ENCODE measurements at regions of chr2 and their contacts with region 1.

Region 1: DNA sequence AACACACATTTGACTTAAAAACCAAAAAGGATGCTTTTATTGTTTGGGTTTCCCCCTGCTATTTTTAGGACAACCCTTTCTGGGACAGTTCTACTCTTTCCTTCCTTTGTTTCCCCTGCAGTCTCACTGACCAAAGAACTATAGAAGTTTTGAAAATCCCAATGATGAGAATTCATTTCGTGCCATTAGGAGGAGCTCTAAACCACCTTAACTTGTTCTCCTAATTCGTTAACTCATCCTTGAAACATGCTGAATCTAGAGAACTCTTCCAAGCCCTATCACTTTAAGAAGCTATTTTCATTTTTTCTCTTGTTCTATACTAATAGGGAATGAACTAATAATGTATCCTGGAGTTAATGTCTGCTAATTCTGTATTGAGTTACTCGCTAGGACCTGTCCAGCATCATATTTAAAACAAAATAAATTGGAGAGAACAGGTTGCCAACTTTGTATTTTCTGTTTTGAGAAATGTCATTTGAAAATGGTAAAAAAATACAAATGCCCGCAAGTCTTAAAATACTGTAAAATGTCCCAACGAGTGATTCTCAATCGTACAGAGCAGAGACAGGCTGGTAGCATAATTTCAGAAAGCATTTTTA is 62.9 kb downstream of the AFTPH start:
- DNase-seq: no peak
- H3K4me3 ChIP-seq: no peak overlapping the region
- H3K27ac ChIP-seq: no peak overlapping the region
- H3K4me1 ChIP-seq: no peaks in the 10 kb centered on the region
- H3K27me3 ChIP-seq: no peaks in the 10 kb centered on the region
- CTCF ChIP-seq: peak; percentile 39 to 72 (median 62)
- POLR2A ChIP-seq: no peak

Region 2: DNA sequence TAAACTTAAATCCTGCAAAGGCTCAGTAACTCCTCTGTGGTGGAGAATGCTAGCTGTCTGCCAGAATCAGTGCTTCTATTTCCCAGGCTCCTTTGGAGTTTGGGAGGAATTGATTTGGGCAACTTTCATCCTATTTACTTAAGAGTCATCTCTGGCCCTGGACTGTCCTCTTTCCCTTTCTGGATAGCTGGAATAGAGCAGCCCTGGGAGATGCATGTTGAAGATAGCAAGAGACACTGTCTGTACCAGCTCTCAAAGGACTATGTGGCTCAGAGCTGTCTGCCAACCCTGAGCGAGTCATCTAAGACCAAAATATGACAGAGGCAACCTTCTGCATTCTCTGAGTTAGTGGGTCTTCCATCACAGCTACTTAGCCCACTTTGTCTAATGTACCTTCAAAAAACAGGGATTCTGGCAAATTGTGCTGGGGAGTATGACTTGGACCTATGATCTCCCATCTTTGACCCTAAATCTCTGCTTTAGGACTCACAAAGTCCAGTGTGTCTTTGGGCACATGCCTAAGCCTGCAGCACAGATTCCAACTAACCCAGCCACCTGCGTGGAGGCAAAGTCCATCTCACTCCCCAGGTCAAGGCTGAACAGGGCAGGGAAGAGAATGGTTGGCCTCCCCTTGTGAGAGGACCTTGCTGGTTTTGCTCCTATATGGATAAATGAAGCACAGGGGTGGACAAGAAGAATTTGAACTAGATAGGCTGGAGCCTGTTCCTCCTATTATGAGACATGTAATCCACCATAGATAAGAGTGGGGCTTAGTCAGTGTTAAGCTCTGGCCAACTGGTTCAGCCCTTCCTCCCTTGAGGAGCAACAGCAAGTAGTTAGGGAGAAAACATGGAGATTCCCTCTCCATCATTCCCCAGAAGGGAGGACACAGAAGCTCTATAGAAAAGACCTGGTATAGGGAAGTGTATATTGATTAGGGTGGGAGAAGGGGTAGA is 343.6 kb before region 1 on chr2:
- intact Hi-C with region 1: no loop called
- DNase-seq: no peak
- H3K4me3 ChIP-seq: no peak overlapping the region
- H3K27ac ChIP-seq: no peak overlapping the region
- H3K4me1 ChIP-seq: no peaks in the 10 kb centered on the region
- H3K27me3 ChIP-seq: no peaks in the 10 kb centered on the region
- CTCF ChIP-seq: no peak
- POLR2A ChIP-seq: no peak

Region 3: DNA sequence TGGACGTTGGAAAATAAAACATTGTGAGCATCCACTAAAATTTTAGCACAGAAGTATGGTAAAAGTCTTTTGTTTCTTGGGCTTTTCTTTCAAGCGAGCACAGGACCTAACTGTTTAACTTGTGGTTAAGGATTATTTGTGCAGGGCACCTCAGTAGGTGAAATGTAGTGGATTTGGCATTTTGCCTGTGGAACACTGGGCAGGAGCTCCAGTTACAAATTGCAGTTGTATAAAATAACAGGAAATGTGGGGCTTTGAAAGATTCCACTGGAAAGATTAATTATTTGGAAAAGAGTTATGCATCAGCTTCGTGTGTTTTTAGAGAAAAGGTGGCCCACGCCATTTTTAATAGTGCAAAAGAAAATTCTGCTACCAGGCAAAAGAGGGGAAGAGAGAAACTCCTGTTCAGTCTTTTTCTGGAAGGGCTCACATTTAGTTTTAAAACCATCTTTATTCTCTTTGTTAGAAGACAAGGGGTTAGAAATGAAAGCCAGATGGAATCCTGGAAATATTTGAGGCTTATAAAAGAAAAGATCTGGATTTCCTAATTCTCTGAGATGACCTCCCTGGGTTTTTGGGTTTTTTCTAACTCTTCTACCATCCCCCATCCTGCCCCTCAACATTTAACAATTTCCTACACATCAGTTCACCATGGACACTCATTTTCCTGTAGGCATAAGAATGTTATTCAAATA is 211.0 kb after region 1 on chr2:
- intact Hi-C with region 1: no loop called
- DNase-seq: no peak
- H3K4me3 ChIP-seq: no peak overlapping the region
- H3K27ac ChIP-seq: peak overlapping the region in 1 of 2 donors; percentile 27
- H3K4me1 ChIP-seq: no peaks in the 10 kb centered on the region
- H3K27me3 ChIP-seq: no peaks in the 10 kb centered on the region
- CTCF ChIP-seq: no peak
- POLR2A ChIP-seq: no peak

Region 4: GRCh38 chr2:64865073-64865830 is 278.3 kb after region 1 on chr2:
- intact Hi-C with region 1: loop called (anchors 10 kb)
- DNase-seq: peak; percentile 65 to 76
- H3K4me3 ChIP-seq: peak overlapping the region; percentile 62 to 82 (median 63)
- H3K27ac ChIP-seq: peak overlapping the region; percentile 91 to 92
- H3K4me1 ChIP-seq: peaks cover 0 to 13% of the 10 kb centered on the region in 2 donors
- H3K27me3 ChIP-seq: no peaks in the 10 kb centered on the region
- CTCF ChIP-seq: peak in 2 of 3 donors; percentile 45 to 99
- POLR2A ChIP-seq: no peak

Region 5: GRCh38 chr2:64876137-64876647 is 289.2 kb after region 1 on chr2:
- intact Hi-C with region 1: no loop called
- DNase-seq: no peak
- H3K4me3 ChIP-seq: no peak overlapping the region
- H3K27ac ChIP-seq: no peak overlapping the region
- H3K4me1 ChIP-seq: no peaks in the 10 kb centered on the region
- H3K27me3 ChIP-seq: no peaks in the 10 kb centered on the region
- CTCF ChIP-seq: no peak
- POLR2A ChIP-seq: no peak